Naive thymus-derived CD8-positive, alpha-beta T cell (primary cell): ENCODE measurements at regions of chr9 and their contacts with region 1.

Region 1: GRCh38 chr9:134443168-134444037 is 117.1 kb downstream of the RXRA start:
- DNase-seq: peak; percentile 75 to 94 (median 84)
- ATAC-seq: peak; percentile 100
- H3K4me3 Mint-ChIP-seq: peak overlapping the region in 4 of 10 donors; percentile 15 to 34 (median 26)
- H3K27ac Mint-ChIP-seq: peak overlapping the region; percentile 13 to 90 (median 75)
- H3K4me1 Mint-ChIP-seq: peaks cover 5 to 23% (median 17%) of the 10 kb centered on the region in 4 donors
- H3K27me3 Mint-ChIP-seq: peaks cover 2 to 14% (median 10%) of the 10 kb centered on the region in 5 donors

Region 2: GRCh38 chr9:134171316-134172197 is 271.8 kb before region 1 on chr9:
- POLR2A ChIA-PET with region 1: interaction called, 13 read pairs
- DNase-seq: no peak
- ATAC-seq: no peak
- H3K4me3 Mint-ChIP-seq: no peak overlapping the region
- H3K27ac Mint-ChIP-seq: peak overlapping the region in 2 of 10 donors; percentile 16 to 51
- H3K4me1 Mint-ChIP-seq: peaks cover 0 to 12% (median 3%) of the 10 kb centered on the region in 4 donors
- H3K27me3 Mint-ChIP-seq: peaks cover 0 to 4% (median 0%) of the 10 kb centered on the region in 5 donors

Region 3: GRCh38 chr9:134336924-134337323 is 106.5 kb before region 1 on chr9:
- POLR2A ChIA-PET with region 1: no interaction called
- DNase-seq: no peak
- ATAC-seq: no peak
- H3K4me3 Mint-ChIP-seq: no peak overlapping the region
- H3K27ac Mint-ChIP-seq: no peak overlapping the region
- H3K4me1 Mint-ChIP-seq: peaks cover 0 to 12% (median 7%) of the 10 kb centered on the region in 4 donors
- H3K27me3 Mint-ChIP-seq: no peaks in the 10 kb centered on the region

Region 4: DNA sequence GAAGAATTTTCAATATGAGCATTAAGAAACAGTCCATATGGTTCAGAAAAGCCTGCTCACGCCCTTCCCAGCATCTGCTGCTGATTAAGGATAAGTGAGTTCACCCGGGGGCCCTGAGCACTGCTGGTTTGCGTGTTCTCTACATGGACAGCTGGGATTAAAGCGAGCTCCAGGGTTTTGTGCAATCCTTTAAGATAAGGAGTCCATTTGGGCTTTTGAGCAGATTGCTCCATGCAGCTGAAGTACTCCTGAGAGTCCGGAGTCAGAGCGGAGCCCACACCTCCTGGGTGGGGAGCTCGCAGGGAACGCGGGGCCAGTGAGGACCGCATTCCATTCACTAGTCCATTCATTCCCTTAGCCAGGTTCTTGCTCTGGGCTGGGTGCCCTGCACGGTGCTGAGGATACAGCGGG is 48.9 kb after region 1 on chr9:
- POLR2A ChIA-PET with region 1: no interaction called
- DNase-seq: peak in 1 of 10 donors; percentile 38
- ATAC-seq: no peak
- H3K4me3 Mint-ChIP-seq: no peak overlapping the region
- H3K27ac Mint-ChIP-seq: peak overlapping the region in 1 of 10 donors; percentile 22
- H3K4me1 Mint-ChIP-seq: peaks cover 0 to 4% (median under 1%) of the 10 kb centered on the region in 4 donors
- H3K27me3 Mint-ChIP-seq: peaks cover 2 to 28% (median 6%) of the 10 kb centered on the region in 5 donors